ENCODE measurements at regions of chr20 and their contacts with region 1.

Region 1: DNA sequence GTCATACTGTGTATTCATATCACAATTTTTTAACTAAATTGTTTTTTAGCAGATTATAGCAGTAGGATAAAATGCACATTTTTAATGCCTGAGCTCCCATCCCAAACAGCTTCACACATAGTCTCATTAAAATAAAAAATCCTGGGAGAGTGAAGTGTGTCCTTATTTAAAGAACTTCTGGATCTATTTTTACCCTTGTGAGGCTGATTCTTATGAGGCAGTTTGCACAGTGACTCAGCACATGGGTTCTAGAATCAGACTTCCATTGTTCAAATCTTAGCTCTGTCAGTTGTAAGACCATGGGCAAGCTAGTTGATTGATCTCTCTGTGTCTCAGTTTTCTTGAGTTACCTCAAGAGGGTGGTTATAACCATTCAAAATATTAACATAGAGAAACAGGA is 72.3 kb downstream of the MACROD2 start:
- DNase-seq: no peak
- H3K4me3 ChIP-seq: no peak overlapping the region
- H3K27me3 ChIP-seq: no peaks in the 10 kb centered on the region
- CTCF ChIP-seq: no peak

Region 2: GRCh38 chr20:14055127-14055742 is 12.4 kb before region 1 on chr20:
- CTCF ChIA-PET with region 1: interaction called, 13 read pairs
- POLR2A ChIA-PET with region 1: no interaction called
- DNase-seq: peak; percentile 24
- H3K4me3 ChIP-seq: no peak overlapping the region
- H3K27me3 ChIP-seq: no peaks in the 10 kb centered on the region
- CTCF ChIP-seq: peak; percentile 46

Measured in BJ (cell line).